Mammary epithelial cell (primary cell): ENCODE measurements at regions of chr4 and their contacts with region 1.

Region 1: GRCh38 chr4:105146276-105147015 is at the start of gene TET2:
- DNase-seq: peak; percentile 83
- H3K4me3 ChIP-seq: peak within 1 kb of the TSS; percentile 68 to 100 (median 85)
- H3K27ac ChIP-seq: peak within 1 kb of the TSS; percentile 91
- H3K4me1 ChIP-seq: peaks cover 9% of the 10 kb centered on the region
- H3K27me3 ChIP-seq: no peaks in the 10 kb centered on the region
- CTCF ChIP-seq: peak in 1 of 2 donors; percentile 2
- total RNA-seq, gene TET2: 16.4 to 18.0 TPM

Region 2: DNA sequence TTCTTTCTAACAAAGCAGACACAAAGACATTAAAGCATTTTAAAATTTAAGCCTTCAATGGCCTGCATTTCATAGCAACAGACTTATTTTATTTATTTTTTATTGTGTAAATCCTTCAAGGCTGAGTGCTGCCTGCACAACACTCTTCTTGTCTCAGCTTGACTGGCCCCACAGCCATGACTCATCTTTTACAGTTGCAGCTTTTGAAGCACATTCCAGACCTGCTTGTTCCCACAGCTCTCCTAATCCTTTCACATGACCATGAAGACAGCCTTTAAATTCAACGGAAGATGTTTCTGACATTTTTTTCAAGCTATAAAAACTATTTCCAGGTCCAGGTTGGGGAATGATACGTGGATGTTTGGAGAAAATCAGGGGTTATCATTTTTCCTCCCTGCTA is 1149.8 kb before region 1 on chr4:
- CTCF ChIA-PET with region 1: no interaction called
- dilution Hi-C with region 1: no loop called
- in situ Hi-C with region 1: no loop called
- intact Hi-C with region 1: loop called (anchors 10 kb)
- DNase-seq: peak; percentile 94
- H3K4me3 ChIP-seq: peak overlapping the region; percentile 19 to 54 (median 24)
- H3K27ac ChIP-seq: peak overlapping the region; percentile 86
- H3K4me1 ChIP-seq: no peaks in the 10 kb centered on the region
- H3K27me3 ChIP-seq: no peaks in the 10 kb centered on the region
- CTCF ChIP-seq: no peak

Region 3: GRCh38 chr4:104631000-104631399 is 515.4 kb before region 1 on chr4:
- CTCF ChIA-PET with region 1: no interaction called
- dilution Hi-C with region 1: no loop called
- in situ Hi-C with region 1: no loop called
- intact Hi-C with region 1: no loop called
- DNase-seq: no peak
- H3K4me3 ChIP-seq: no peak overlapping the region
- H3K27ac ChIP-seq: no peak overlapping the region
- H3K4me1 ChIP-seq: no peaks in the 10 kb centered on the region
- H3K27me3 ChIP-seq: no peaks in the 10 kb centered on the region
- CTCF ChIP-seq: no peak

Region 4: DNA sequence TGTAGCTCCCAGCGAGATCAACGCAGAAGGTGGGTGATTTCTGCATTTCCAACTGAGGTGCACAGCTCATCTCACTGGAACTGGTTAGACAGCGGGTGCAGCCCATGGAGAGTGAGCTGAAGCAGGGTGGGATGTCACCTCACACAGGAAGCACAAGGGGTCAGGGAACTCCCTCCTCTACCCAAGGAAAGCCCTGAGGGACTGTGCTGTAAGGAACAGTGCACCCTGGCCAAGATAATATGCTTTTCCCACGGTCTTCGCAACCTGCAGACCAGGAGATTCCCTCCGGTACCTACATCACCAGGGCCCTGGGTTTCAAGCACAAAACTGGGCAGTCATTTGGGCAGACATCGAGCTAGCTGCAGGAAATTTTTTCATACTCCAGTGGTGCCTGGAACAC is 216.1 kb before region 1 on chr4:
- CTCF ChIA-PET with region 1: no interaction called
- dilution Hi-C with region 1: no loop called
- in situ Hi-C with region 1: no loop called
- intact Hi-C with region 1: loop called (anchors 1 kb)
- DNase-seq: no peak
- H3K4me3 ChIP-seq: no peak overlapping the region
- H3K27ac ChIP-seq: no peak overlapping the region
- H3K4me1 ChIP-seq: no peaks in the 10 kb centered on the region
- H3K27me3 ChIP-seq: no peaks in the 10 kb centered on the region
- CTCF ChIP-seq: no peak

Region 5: GRCh38 chr4:105191621-105192210 is 45.3 kb after region 1 on chr4:
- CTCF ChIA-PET with region 1: no interaction called
- dilution Hi-C with region 1: no loop called
- in situ Hi-C with region 1: no loop called
- intact Hi-C with region 1: loop called (anchors 5 kb)
- DNase-seq: peak; percentile 19
- H3K4me3 ChIP-seq: no peak overlapping the region
- H3K27ac ChIP-seq: no peak overlapping the region
- H3K4me1 ChIP-seq: peaks cover 15% of the 10 kb centered on the region
- H3K27me3 ChIP-seq: no peaks in the 10 kb centered on the region
- CTCF ChIP-seq: no peak

Region 6: GRCh38 chr4:105257826-105258495 is 111.5 kb after region 1 on chr4:
- CTCF ChIA-PET with region 1: no interaction called
- dilution Hi-C with region 1: no loop called
- in situ Hi-C with region 1: no loop called
- intact Hi-C with region 1: loop called (anchors 5 kb)
- DNase-seq: no peak
- H3K4me3 ChIP-seq: no peak overlapping the region
- H3K27ac ChIP-seq: no peak overlapping the region
- H3K4me1 ChIP-seq: no peaks in the 10 kb centered on the region
- H3K27me3 ChIP-seq: no peaks in the 10 kb centered on the region
- CTCF ChIP-seq: peak; percentile 6 to 40

Region 7: DNA sequence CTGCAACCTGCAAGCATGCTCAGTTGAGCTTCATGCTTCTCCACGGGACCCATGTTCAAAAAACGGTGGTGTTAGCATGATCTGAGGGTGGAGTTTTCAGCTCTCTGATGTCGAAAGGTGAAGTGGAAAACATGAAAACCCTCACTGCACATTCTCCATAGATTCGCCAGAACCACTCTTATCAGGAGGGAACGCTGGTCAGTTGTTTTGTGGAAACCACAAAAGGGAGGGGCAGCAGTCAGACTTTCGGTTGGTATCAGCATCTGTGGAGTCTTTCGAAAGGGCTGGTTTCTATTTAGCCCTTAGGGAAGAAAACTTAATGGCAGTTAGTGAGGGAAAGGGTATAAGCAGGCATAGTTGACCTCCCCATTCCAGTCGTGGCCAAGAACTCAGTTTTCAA is 314.8 kb after region 1 on chr4:
- CTCF ChIA-PET with region 1: no interaction called
- dilution Hi-C with region 1: no loop called
- in situ Hi-C with region 1: loop called (anchors 10 to 25 kb)
- intact Hi-C with region 1: no loop called
- DNase-seq: peak; percentile 61
- H3K4me3 ChIP-seq: no peak overlapping the region
- H3K27ac ChIP-seq: no peak overlapping the region
- H3K4me1 ChIP-seq: no peaks in the 10 kb centered on the region
- H3K27me3 ChIP-seq: no peaks in the 10 kb centered on the region
- CTCF ChIP-seq: no peak